Activated CD8-positive, alpha-beta T cell treated with anti-CD3 and anti-CD28 coated beads, Interleukin-2, amount 10 ng/mL, durations not matched to agents 7 days and 5 days (primary cell): ENCODE measurements at regions of chr2 and their contacts with region 1.

Region 1: GRCh38 chr2:203740780-203741281 is 34.4 kb downstream of the CD28 start:
- DNase-seq: peak; percentile 57
- ATAC-seq: peak; percentile 83
- H3K4me3 Mint-ChIP-seq: peak overlapping the region; percentile 61
- H3K27ac Mint-ChIP-seq: peak overlapping the region; percentile 94
- H3K4me1 Mint-ChIP-seq: peaks cover 75% of the 10 kb centered on the region
- H3K27me3 Mint-ChIP-seq: no peaks in the 10 kb centered on the region

Region 2: GRCh38 chr2:203612266-203612665 is 128.6 kb before region 1 on chr2:
- CTCF ChIA-PET with region 1: no interaction called
- POLR2A ChIA-PET with region 1: no interaction called
- DNase-seq: no peak
- ATAC-seq: no peak
- H3K4me3 Mint-ChIP-seq: no peak overlapping the region
- H3K27ac Mint-ChIP-seq: no peak overlapping the region
- H3K4me1 Mint-ChIP-seq: no peaks in the 10 kb centered on the region
- H3K27me3 Mint-ChIP-seq: peaks cover 2% of the 10 kb centered on the region

Region 3: GRCh38 chr2:203706403-203706802 is 34.4 kb before region 1 on chr2 and contains the start of gene CD28:
- CTCF ChIA-PET with region 1: interaction called, 30 read pairs
- POLR2A ChIA-PET with region 1: interaction called, 57 read pairs
- DNase-seq: peak; percentile 95
- ATAC-seq: peak; percentile 81
- H3K4me3 Mint-ChIP-seq: peak within 1 kb of the TSS; percentile 72
- H3K27ac Mint-ChIP-seq: peak within 1 kb of the TSS; percentile 87
- H3K4me1 Mint-ChIP-seq: peaks cover 66% of the 10 kb centered on the region
- H3K27me3 Mint-ChIP-seq: no peaks in the 10 kb centered on the region
- total RNA-seq, gene CD28: 25.6 to 27.2 TPM

Region 4: GRCh38 chr2:203718087-203718486 is 22.7 kb before region 1 on chr2:
- CTCF ChIA-PET with region 1: interaction called, 95 read pairs
- POLR2A ChIA-PET with region 1: interaction called, 90 read pairs
- DNase-seq: peak; percentile 89
- ATAC-seq: peak; percentile 84
- H3K4me3 Mint-ChIP-seq: peak overlapping the region; percentile 62
- H3K27ac Mint-ChIP-seq: peak overlapping the region; percentile 90
- H3K4me1 Mint-ChIP-seq: peaks cover 95% of the 10 kb centered on the region
- H3K27me3 Mint-ChIP-seq: no peaks in the 10 kb centered on the region

Region 5: GRCh38 chr2:203730076-203730729 is 10.6 kb before region 1 on chr2:
- CTCF ChIA-PET with region 1: interaction called, 15 read pairs
- POLR2A ChIA-PET with region 1: interaction called, 54 read pairs
- DNase-seq: no peak
- ATAC-seq: peak; percentile 55
- H3K4me3 Mint-ChIP-seq: no peak overlapping the region
- H3K27ac Mint-ChIP-seq: peak overlapping the region; percentile 72
- H3K4me1 Mint-ChIP-seq: peaks cover 81% of the 10 kb centered on the region
- H3K27me3 Mint-ChIP-seq: no peaks in the 10 kb centered on the region

Region 6: DNA sequence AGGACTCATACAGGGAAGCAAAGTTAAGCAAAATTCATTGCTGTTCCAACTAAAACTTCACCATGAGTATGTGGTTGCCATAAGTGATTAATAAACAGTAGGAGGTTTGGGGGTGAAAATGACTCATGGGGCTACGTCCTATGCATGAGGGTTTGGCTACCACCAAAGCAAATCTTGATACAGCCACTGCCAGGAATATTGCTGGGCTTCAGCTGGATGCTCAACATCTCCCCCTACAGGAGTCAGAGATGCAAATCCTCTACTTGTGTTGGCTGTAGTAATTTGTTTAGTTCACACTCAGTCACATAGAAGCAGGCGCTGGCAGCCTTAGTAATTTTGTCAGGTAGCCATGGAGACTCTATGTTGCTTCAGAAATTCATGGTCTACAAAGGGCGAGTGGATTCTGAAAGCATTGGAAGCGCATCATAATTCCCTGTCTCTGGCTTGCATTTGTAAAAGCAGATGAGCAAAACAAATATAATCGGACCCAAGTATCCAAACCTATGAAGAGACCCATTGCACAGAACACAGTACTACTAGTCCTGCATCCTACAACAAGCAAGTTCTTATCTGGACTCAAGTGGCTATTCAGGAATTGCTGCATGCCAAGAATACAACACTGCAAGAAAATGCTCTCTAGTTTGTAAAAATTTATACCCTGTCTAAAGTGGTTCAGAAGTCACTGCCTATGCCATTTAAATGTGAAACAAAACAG is 41.6 kb after region 1 on chr2:
- CTCF ChIA-PET with region 1: interaction called, 28 read pairs
- POLR2A ChIA-PET with region 1: interaction called, 3 read pairs
- DNase-seq: peak; percentile 72
- ATAC-seq: peak; percentile 90
- H3K4me3 Mint-ChIP-seq: no peak overlapping the region
- H3K27ac Mint-ChIP-seq: peak overlapping the region; percentile 44
- H3K4me1 Mint-ChIP-seq: peaks cover 62% of the 10 kb centered on the region
- H3K27me3 Mint-ChIP-seq: no peaks in the 10 kb centered on the region

Region 7: DNA sequence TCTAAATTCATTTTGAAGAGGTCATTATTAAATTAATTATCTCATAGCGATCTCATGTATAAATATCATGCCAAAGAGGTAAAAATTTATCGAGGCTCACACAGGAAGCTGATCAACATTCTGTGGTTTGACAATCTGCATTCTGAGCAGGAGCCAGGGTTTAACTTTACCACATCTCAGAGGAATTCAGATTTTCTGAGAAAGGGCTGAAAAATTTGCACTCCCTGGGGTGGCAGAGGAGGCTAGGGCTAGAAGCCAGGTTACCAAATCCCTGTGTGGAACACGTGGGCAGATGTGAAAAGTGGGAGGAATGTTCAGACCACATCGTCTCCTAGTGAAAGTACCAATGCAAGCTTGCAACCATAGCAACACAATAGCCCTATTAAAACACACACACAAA is 63.2 kb after region 1 on chr2:
- CTCF ChIA-PET with region 1: interaction called, 7 read pairs
- POLR2A ChIA-PET with region 1: interaction called, 15 read pairs
- DNase-seq: peak; percentile 49
- ATAC-seq: peak; percentile 77
- H3K4me3 Mint-ChIP-seq: peak overlapping the region; percentile 16
- H3K27ac Mint-ChIP-seq: peak overlapping the region; percentile 52
- H3K4me1 Mint-ChIP-seq: peaks cover 63% of the 10 kb centered on the region
- H3K27me3 Mint-ChIP-seq: no peaks in the 10 kb centered on the region